Colonic mucosa (tissue), 4 donors: ENCODE measurements at regions of chrX and their contacts with region 1.

Region 1: GRCh38 chrX:68732906-68733493 is 85.5 kb downstream of the STARD8 start:
- DNase-seq: peak; percentile 66
- H3K4me3 ChIP-seq: no peak overlapping the region
- H3K27ac ChIP-seq: no peak overlapping the region
- H3K4me1 ChIP-seq: no peaks in the 10 kb centered on the region
- H3K27me3 ChIP-seq: no peaks in the 10 kb centered on the region
- CTCF ChIP-seq: peak; percentile 63

Region 2: GRCh38 chrX:68550193-68550592 is 182.8 kb before region 1 on chrX:
- intact Hi-C with region 1: no loop called
- DNase-seq: no peak
- H3K4me3 ChIP-seq: no peak overlapping the region
- H3K27ac ChIP-seq: no peak overlapping the region
- H3K4me1 ChIP-seq: no peaks in the 10 kb centered on the region
- H3K27me3 ChIP-seq: no peaks in the 10 kb centered on the region
- CTCF ChIP-seq: no peak

Region 3: DNA sequence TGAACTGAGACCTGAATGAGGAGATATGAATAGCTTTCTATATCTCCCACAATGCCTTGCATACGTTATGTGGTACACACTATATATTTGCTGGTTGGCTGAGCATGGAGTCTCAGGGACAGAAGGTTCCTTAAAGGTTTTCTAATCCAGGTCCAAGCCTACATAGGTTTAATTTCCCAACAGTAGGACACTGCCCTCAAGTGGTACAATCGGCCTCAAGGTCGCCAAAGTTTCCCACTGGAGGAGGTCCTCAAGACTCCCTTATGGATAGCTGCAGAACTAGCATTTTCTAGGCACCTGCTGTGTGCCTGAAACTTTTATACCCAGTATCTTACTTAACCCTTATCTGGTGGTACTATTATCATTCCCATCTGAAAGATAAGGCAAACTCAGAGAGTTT is 74.8 kb after region 1 on chrX:
- intact Hi-C with region 1: loop called (anchors 5 kb)
- DNase-seq: no peak
- H3K4me3 ChIP-seq: no peak overlapping the region
- H3K27ac ChIP-seq: no peak overlapping the region
- H3K4me1 ChIP-seq: no peaks in the 10 kb centered on the region
- H3K27me3 ChIP-seq: no peaks in the 10 kb centered on the region
- CTCF ChIP-seq: no peak

Region 4: DNA sequence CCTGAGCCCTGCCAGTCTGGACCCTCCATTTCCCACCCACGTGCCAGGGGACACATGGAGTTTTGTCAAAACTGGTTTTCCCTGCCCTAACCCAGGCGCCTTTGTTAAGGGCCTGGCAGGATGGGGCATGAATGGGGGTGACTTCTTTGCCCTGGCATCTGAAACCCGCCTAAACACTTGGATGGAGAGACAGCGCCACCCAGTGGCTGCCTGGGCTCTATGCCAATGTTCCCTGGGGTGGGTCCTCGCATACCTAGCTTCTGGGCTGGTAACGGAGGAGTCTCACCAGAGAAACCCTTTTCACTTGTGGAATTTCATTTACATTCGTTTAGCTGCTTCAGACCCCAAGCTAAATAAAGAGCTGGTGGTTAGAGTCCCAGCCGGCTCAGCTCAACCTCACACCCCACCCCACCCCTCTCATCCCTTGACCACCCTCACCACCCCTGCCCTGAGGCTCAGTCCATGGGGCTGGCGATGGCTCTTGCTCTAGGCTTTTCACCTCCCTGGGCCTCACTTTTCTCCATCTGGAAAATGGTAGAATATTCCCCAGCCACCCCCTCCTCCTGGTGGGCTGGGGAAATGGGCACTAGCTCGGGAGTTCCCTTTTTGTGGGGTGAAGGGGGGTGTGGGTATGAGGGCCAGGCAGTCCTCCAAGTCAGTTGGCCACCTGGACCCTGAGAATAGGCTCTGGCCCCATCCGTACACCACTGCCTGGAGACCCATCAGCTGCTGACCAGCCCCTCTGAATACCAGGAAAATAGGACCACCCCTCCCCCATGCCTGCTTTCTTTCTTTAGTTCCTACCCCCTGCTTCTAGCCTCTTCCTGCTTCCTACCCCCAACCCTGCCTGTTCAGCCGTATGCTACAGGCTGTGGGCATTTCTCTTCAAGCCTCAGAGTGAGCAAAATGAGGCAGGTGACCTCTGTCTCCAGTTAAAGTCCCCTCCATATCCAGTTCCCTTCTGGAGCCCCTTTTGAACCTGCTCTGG is 489.4 kb after region 1 on chrX:
- intact Hi-C with region 1: loop called (anchors 10 kb)
- DNase-seq: peak; percentile 61
- H3K4me3 ChIP-seq: no peak overlapping the region
- H3K27ac ChIP-seq: no peak overlapping the region
- H3K4me1 ChIP-seq: no peaks in the 10 kb centered on the region
- H3K27me3 ChIP-seq: no peaks in the 10 kb centered on the region
- CTCF ChIP-seq: peak; percentile 74

Region 5: GRCh38 chrX:69262036-69262936 is 529.3 kb after region 1 on chrX:
- intact Hi-C with region 1: no loop called
- DNase-seq: no peak
- H3K4me3 ChIP-seq: no peak overlapping the region
- H3K27ac ChIP-seq: no peak overlapping the region
- H3K4me1 ChIP-seq: no peaks in the 10 kb centered on the region
- H3K27me3 ChIP-seq: no peaks in the 10 kb centered on the region
- CTCF ChIP-seq: no peak

Region 6: DNA sequence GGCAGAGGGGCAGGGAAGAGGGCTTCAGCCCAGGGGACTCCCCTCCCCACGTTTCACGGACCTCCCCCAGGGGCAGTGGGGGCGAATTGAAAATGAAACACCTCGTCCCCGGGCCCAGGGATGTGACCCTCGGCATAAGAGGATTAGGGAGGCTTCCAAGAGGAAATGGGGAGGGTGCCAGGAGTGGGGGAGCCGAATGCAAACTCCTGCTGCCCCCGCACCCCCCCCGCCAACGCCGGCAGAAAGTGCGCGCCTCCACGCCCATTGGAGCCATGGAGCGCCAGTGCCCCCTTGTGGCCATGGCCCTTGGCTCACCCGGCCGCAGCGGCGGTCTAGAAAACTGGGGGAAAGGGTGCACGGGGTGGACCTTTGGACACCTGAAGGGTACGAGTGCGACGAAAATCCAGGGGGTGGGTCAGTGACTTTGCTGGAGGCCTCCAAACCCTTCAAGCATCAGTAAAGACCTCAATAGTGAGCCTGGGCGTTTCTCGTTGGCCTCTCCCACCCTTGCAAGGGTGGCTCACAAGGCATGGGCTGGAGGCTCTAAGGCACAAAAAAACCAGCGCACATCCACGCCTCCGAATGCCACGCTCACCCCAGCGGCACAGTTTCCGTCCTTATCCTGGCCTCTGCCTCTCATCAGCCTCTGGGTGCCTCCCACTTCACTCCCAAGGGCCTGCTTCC is 553.0 kb after region 1 on chrX:
- intact Hi-C with region 1: loop called (anchors 10 kb)
- DNase-seq: peak; percentile 63
- H3K4me3 ChIP-seq: peak overlapping the region; percentile 23
- H3K27ac ChIP-seq: no peak overlapping the region
- H3K4me1 ChIP-seq: no peaks in the 10 kb centered on the region
- H3K27me3 ChIP-seq: no peaks in the 10 kb centered on the region
- CTCF ChIP-seq: peak; percentile 81

Region 7: DNA sequence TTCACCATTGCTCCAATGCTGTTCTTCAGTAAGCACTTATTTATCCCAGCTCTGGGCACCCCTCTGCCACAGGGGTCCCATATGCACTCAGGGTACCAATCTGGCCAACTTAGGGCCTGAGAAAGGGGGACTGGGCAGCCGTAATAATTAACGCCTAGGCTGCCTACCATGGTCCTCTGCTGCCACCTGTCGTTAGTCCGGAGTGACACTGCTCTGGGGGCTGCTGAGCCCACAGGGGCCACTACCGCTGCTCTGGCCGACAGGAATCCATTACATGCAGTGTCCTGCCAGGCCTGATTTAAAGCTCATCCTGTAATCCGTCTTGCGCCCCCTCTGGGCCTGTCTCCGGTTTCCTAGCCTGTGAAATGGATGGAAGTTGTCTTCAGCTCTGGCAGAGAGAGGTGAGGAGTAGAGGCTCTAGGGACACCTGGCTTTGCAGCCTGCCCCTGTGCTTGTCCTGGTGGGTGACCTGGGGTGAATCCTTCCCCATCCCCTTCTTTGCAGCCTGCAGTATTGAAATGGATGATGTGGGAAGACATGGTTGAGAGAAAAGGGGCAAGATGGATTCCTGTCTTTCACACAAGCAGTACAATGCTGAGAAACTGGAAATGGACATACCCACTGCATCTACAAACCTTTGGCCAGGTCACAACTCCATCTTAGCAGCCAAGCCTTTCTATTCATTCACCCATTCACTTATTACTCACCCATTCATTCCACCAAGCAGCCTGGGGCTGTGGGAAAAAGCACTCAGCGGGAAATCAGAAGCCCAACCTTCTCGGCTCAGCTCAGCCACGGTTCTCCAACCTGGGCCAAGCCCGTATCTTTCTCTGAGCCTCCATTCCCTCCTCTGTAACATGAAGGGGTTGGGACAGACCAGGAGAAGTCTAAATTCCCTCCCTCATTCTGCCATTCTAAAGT is 654.8 kb after region 1 on chrX:
- intact Hi-C with region 1: loop called (anchors 10 kb)
- DNase-seq: peak; percentile 41
- H3K4me3 ChIP-seq: no peak overlapping the region
- H3K27ac ChIP-seq: no peak overlapping the region
- H3K4me1 ChIP-seq: no peaks in the 10 kb centered on the region
- H3K27me3 ChIP-seq: peaks cover 3% of the 10 kb centered on the region
- CTCF ChIP-seq: peak; percentile 79